Naive thymus-derived CD8-positive, alpha-beta T cell (primary cell): ENCODE measurements at regions of chr9 and their contacts with region 1.

Region 1: DNA sequence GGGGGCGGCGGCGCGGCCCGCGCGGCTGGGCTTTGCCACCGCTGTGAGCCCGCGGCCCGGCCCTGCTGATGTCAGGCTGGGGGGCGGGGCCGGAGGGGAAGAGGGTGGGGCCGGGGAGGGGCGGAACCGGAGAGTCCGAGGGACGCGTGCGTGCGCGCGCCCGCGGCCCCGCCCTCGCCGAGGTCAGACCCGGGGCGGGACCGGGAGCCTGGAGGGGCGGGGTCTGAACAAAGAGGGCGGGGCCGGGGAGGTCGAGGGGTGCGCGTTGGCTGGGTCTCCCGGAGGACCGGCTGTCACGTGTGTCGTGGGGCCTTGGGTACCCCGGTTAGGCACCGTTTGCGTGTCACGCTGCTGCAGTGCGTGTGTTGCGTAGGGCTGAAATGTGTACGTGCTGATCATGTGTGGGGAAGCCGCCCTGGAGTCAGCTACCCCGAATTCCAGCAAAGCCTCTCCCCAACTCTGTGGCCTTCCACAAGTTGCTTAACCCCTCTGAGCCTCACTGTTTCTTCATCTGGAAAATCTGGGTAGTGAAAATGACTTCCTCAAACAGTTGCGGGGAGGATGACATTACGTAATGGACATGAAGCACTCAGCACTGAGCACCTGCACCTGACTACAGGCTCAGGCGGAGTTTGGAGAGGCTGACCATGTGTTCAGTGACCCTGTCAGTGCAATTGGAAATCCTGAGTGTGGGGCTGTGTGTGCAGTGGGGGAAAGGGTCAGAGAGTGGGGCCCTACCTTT is at the start of gene RALGDS:
- DNase-seq: peak; percentile 83 to 97 (median 88)
- ATAC-seq: peak; percentile 72 to 76
- H3K4me3 Mint-ChIP-seq: peak within 1 kb of the TSS; percentile 75 to 89 (median 82)
- H3K27ac Mint-ChIP-seq: peak within 1 kb of the TSS; percentile 90 to 100 (median 98)
- H3K4me1 Mint-ChIP-seq: peaks cover 36 to 74% (median 63%) of the 10 kb centered on the region in 4 donors
- H3K27me3 Mint-ChIP-seq: no peaks in the 10 kb centered on the region
- polyA plus RNA-seq, gene RALGDS: 14.1 to 35.5 (median 29.4) TPM

Region 2: DNA sequence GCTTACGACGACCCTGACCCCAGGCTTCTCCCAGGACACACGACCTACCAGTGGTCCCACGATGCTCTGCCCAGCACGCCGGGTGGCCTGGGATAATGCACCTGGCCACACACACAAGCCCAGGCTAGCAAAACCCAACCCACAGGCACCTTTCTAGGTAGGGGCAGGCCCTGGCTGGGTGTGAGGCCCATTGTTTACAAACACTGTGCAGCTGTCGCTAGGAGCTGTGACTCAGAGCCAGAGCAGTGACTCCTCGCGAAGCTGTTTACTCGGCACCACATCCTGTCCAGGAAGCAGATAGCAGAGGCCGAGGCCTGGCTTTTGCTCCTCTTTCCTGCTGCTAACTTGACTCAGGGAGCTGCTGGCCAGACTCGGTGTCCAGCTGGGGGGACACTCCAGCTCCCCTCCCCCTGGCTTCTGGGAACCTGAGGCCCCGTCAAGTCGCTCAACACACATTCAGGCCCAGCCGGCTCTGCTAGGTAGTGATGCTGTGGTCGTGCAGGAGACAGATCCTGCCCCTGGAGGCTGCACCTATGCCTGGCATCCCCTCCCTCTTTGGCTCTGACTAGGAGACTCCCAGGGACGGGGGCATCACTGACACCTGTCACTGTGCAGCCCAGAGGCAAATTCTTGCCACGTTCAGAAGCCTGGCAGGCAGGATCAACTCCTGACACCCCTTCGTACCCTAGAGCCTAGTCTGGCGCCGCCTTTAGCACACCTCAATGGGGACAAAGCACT is 12.5 kb after region 1 on chr9:
- POLR2A ChIA-PET with region 1: interaction called, 54 read pairs
- DNase-seq: peak; percentile 65 to 96 (median 89)
- ATAC-seq: peak; percentile 80 to 87
- H3K4me3 Mint-ChIP-seq: peak overlapping the region; percentile 61 to 92 (median 86)
- H3K27ac Mint-ChIP-seq: peak overlapping the region; percentile 100
- H3K4me1 Mint-ChIP-seq: peaks cover 35 to 72% (median 61%) of the 10 kb centered on the region in 4 donors
- H3K27me3 Mint-ChIP-seq: no peaks in the 10 kb centered on the region

Region 3: GRCh38 chr9:133199648-133200321 is 78.4 kb after region 1 on chr9:
- POLR2A ChIA-PET with region 1: no interaction called
- DNase-seq: peak in 8 of 10 donors; percentile 9 to 66 (median 38)
- ATAC-seq: peak; percentile 67 to 96
- H3K4me3 Mint-ChIP-seq: peak overlapping the region; percentile 31 to 88 (median 72)
- H3K27ac Mint-ChIP-seq: peak overlapping the region in 4 of 10 donors; percentile 39 to 80 (median 71)
- H3K4me1 Mint-ChIP-seq: peaks cover 2 to 16% (median 5%) of the 10 kb centered on the region in 4 donors
- H3K27me3 Mint-ChIP-seq: peaks cover 6 to 33% (median 14%) of the 10 kb centered on the region in 5 donors